Dorsolateral prefrontal cortex (tissue), 120 donors: ENCODE measurements at regions of chr18 and their contacts with region 1.

Region 1: GRCh38 chr18:40407909-40408308 is 1547.1 kb upstream of the PIK3C3 start:
- DNase-seq: no peak
- H3K4me3 ChIP-seq: no peak overlapping the region
- H3K27ac ChIP-seq: peak overlapping the region in 17 of 59 donors; percentile 4 to 61 (median 25)
- H3K27me3 ChIP-seq: no peaks in the 10 kb centered on the region
- CTCF ChIP-seq: no peak

Region 2: DNA sequence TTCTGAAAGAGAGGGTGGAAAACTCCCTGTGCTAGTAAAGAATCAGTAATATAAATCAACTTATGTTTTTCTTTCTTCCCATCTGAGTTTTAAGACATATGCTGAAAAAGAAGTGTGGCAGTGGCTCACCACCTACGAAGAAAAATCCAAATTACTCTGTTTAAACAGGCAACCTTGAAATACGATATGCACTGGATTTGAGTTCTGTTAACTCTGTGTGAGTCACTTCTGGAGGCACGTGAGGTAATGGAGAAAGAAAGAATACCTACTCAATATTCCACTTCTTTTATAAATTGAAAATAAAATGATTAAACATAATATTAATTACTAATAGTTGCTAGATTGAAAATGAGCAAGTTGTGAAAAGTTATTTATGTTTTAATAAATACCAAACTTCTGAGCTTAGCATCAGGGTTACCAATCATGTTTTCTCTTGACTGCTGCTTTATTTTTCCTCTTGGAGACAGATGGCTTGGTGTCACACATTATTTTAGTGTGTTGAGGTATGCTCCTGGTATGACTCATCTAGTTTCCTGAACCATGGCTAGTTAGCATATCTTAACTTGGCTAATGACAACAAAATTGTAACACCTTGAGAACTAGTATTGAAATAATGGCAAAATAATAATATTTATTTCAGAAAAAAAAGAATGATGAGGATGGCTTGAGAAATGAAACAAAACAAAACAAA is 158.4 kb before region 1 on chr18:
- intact Hi-C with region 1: loop called in 1 of 2 experiments (anchors 2 kb)
- DNase-seq: no peak
- H3K4me3 ChIP-seq: no peak overlapping the region
- H3K27ac ChIP-seq: peak overlapping the region in 23 of 59 donors; percentile 1 to 73 (median 44)
- H3K27me3 ChIP-seq: no peaks in the 10 kb centered on the region
- CTCF ChIP-seq: no peak

Region 3: GRCh38 chr18:41075212-41075611 is 667.3 kb after region 1 on chr18:
- intact Hi-C with region 1: no loop called
- DNase-seq: no peak
- H3K4me3 ChIP-seq: no peak overlapping the region
- H3K27ac ChIP-seq: no peak overlapping the region
- H3K27me3 ChIP-seq: no peaks in the 10 kb centered on the region
- CTCF ChIP-seq: no peak